ENCODE measurements at regions of chr16 and their contacts with region 1.

Region 1: GRCh38 chr16:27179500-27180072 is 23.7 kb upstream of the KDM8 start:
- DNase-seq: peak; percentile 58
- ATAC-seq: peak; percentile 87
- H3K4me3 ChIP-seq: no peak overlapping the region
- H3K27ac ChIP-seq: no peak overlapping the region
- H3K4me1 ChIP-seq: peaks cover 3 to 44% of the 10 kb centered on the region in 2 experiments; a peak in 2 of 4 replicates
- H3K27me3 ChIP-seq: no peaks in the 10 kb centered on the region
- CTCF ChIP-seq: peak; percentile 95 to 97 (median 96)
- POLR2A ChIP-seq: no peak
- RAD21 ChIP-seq: peak; percentile 85

Region 2: DNA sequence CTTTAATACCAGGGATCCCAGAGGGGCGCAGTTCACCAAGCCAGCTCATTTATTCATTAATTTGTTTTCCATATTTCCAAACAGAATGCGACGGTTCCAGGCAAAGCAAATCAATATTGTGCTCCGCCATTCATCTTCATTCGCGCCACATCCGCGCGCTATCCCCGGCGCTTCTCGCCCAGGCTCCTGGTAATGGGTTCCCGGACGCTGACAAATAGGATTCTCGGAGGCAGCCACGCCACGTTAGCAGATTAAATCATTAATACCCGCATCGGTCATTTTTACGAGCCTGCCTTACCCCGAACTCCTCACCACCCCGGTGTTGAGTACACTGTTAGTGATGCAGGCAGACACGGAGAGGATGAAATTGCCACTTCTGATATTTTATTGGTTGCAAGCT is 138.9 kb before region 1 on chr16:
- CTCF ChIA-PET with region 1: no interaction called
- POLR2A ChIA-PET with region 1: no interaction called
- RAD21 ChIA-PET with region 1: no interaction called
- intact Hi-C with region 1: no loop called
- DNase-seq: no peak
- ATAC-seq: no peak
- H3K4me3 ChIP-seq: no peak overlapping the region
- H3K27ac ChIP-seq: no peak overlapping the region
- H3K4me1 ChIP-seq: no peaks in the 10 kb centered on the region
- H3K27me3 ChIP-seq: peaks cover 4% of the 10 kb centered on the region; the same call in 1 of the 2 replicates
- CTCF ChIP-seq: no peak
- POLR2A ChIP-seq: no peak
- RAD21 ChIP-seq: no peak

Region 3: DNA sequence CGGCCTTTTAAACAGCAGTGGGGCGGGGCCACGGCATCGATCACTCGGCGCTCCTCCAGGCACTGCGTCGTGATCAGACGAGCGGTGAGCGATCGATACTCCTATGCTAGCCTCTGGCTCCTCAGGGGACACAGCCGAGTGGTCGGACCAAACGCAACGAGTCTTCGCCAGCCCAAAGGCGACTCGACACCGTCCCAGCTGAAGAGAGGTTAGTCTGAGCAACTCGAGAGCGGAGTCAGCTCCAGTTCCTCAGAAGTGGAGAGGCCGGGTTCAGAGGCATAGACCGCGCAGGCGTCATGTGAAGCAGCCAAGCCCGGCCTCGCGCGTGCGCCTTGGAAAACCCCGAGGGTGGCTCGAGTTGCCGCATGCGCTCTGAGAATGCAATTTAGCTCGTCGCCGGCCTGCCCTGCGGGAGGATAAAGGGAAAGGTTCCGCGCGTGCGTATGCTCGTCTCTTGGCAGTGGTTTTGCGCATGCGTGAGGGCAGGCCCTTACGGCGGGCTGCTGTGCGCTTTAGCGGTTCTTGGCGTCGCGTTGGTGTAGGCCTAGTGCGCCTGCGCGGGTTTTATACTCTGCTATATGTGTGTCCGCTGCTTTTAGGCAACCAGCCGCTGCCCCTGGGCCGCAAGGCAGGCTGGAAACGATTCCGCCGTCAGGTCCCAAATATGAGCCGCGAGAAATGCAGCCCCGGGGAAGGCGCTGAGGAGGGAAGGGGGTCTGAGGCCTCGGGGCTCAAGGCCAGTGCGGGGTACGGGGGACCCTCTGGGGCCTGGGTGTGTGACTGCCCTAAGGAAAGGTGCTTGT is 24.0 kb after region 1 on chr16 and contains the start of gene KDM8:
- CTCF ChIA-PET with region 1: interaction called, 21 read pairs
- POLR2A ChIA-PET with region 1: interaction called, 5 read pairs
- RAD21 ChIA-PET with region 1: no interaction called
- intact Hi-C with region 1: no loop called
- DNase-seq: peak; percentile 98
- ATAC-seq: peak; percentile 89
- H3K4me3 ChIP-seq: peak within 1 kb of the TSS; percentile 84 to 93
- H3K27ac ChIP-seq: peak within 1 kb of the TSS; percentile 81
- H3K4me1 ChIP-seq: peaks cover 20 to 26% of the 10 kb centered on the region in 2 experiments
- H3K27me3 ChIP-seq: no peaks in the 10 kb centered on the region
- CTCF ChIP-seq: no peak
- POLR2A ChIP-seq: peak; percentile 71
- RAD21 ChIP-seq: no peak
- total RNA-seq, gene KDM8: 5.3 TPM

Region 4: GRCh38 chr16:27367461-27368357 is 188.1 kb after region 1 on chr16:
- CTCF ChIA-PET with region 1: interaction called, 69 read pairs
- POLR2A ChIA-PET with region 1: no interaction called
- RAD21 ChIA-PET with region 1: interaction called, 10 to 12 read pairs
- intact Hi-C with region 1: loop called (anchors 1 kb)
- DNase-seq: peak; percentile 63
- ATAC-seq: peak; percentile 92
- H3K4me3 ChIP-seq: no peak overlapping the region
- H3K27ac ChIP-seq: no peak overlapping the region
- H3K4me1 ChIP-seq: peaks cover 2 to 37% of the 10 kb centered on the region in 2 experiments; a peak in 3 of 4 replicates
- H3K27me3 ChIP-seq: no peaks in the 10 kb centered on the region
- CTCF ChIP-seq: peak; percentile 74 to 82 (median 82)
- POLR2A ChIP-seq: no peak
- RAD21 ChIP-seq: peak; percentile 95

Region 5: GRCh38 chr16:27374804-27375425 is 195.3 kb after region 1 on chr16:
- CTCF ChIA-PET with region 1: interaction called, 20 read pairs
- POLR2A ChIA-PET with region 1: no interaction called
- RAD21 ChIA-PET with region 1: interaction called in 1 of 2 experiments, 5 read pairs
- intact Hi-C with region 1: no loop called
- DNase-seq: peak; percentile 94
- ATAC-seq: peak; percentile 99
- H3K4me3 ChIP-seq: peak overlapping the region in 1 of 2 experiments; percentile 19; a peak in 2 of 4 replicates
- H3K27ac ChIP-seq: peak overlapping the region; percentile 40
- H3K4me1 ChIP-seq: peaks cover 6 to 16% of the 10 kb centered on the region in 2 experiments; a peak in 3 of 4 replicates
- H3K27me3 ChIP-seq: no peaks in the 10 kb centered on the region
- CTCF ChIP-seq: peak; percentile 43 to 79 (median 69); a peak in 5 of 6 replicates
- POLR2A ChIP-seq: peak; percentile 89
- RAD21 ChIP-seq: peak; percentile 59

Region 6: GRCh38 chr16:27455700-27456099 is 276.1 kb after region 1 on chr16:
- CTCF ChIA-PET with region 1: no interaction called
- POLR2A ChIA-PET with region 1: no interaction called
- RAD21 ChIA-PET with region 1: no interaction called
- intact Hi-C with region 1: loop called (anchors 2 kb)
- DNase-seq: no peak
- ATAC-seq: no peak
- H3K4me3 ChIP-seq: no peak overlapping the region
- H3K27ac ChIP-seq: no peak overlapping the region
- H3K4me1 ChIP-seq: no peaks in the 10 kb centered on the region
- H3K27me3 ChIP-seq: no peaks in the 10 kb centered on the region
- CTCF ChIP-seq: no peak
- POLR2A ChIP-seq: no peak
- RAD21 ChIP-seq: no peak

Measured in HCT116 (cell line).